BJ (cell line): ENCODE measurements at regions of chr12 and their contacts with region 1.

Region 1: GRCh38 chr12:49088190-49088931 is 6.2 kb downstream of the DHH start:
- DNase-seq: peak; percentile 39
- H3K4me3 ChIP-seq: no peak overlapping the region
- H3K27me3 ChIP-seq: peaks cover 9% of the 10 kb centered on the region
- CTCF ChIP-seq: peak; percentile 93

Region 2: GRCh38 chr12:48454667-48455066 is 633.7 kb before region 1 on chr12:
- CTCF ChIA-PET with region 1: no interaction called
- POLR2A ChIA-PET with region 1: no interaction called
- DNase-seq: peak; percentile 1
- H3K4me3 ChIP-seq: no peak overlapping the region
- H3K27me3 ChIP-seq: 0 out of 2 replicates have a peak, but pooled peaks cover 1% of the 10 kb centered on the region
- CTCF ChIP-seq: peak; percentile 31; the same call in 1 of the 2 replicates

Region 3: GRCh38 chr12:48917857-48918537 is 170.4 kb before region 1 on chr12:
- CTCF ChIA-PET with region 1: no interaction called
- POLR2A ChIA-PET with region 1: no interaction called
- DNase-seq: no peak
- H3K4me3 ChIP-seq: no peak overlapping the region
- H3K27me3 ChIP-seq: no peaks in the 10 kb centered on the region
- CTCF ChIP-seq: no peak

Region 4: GRCh38 chr12:49069507-49070346 is 18.6 kb before region 1 on chr12 and contains the start of gene RHEBL1:
- CTCF ChIA-PET with region 1: interaction called, 98 read pairs
- POLR2A ChIA-PET with region 1: no interaction called
- DNase-seq: peak; percentile 71
- H3K4me3 ChIP-seq: peak within 1 kb of the TSS; percentile 71
- H3K27me3 ChIP-seq: no peaks in the 10 kb centered on the region
- CTCF ChIP-seq: peak; percentile 21
- polyA plus RNA-seq, gene RHEBL1: 0.82 and 1.3 TPM in 2 replicates

Region 5: DNA sequence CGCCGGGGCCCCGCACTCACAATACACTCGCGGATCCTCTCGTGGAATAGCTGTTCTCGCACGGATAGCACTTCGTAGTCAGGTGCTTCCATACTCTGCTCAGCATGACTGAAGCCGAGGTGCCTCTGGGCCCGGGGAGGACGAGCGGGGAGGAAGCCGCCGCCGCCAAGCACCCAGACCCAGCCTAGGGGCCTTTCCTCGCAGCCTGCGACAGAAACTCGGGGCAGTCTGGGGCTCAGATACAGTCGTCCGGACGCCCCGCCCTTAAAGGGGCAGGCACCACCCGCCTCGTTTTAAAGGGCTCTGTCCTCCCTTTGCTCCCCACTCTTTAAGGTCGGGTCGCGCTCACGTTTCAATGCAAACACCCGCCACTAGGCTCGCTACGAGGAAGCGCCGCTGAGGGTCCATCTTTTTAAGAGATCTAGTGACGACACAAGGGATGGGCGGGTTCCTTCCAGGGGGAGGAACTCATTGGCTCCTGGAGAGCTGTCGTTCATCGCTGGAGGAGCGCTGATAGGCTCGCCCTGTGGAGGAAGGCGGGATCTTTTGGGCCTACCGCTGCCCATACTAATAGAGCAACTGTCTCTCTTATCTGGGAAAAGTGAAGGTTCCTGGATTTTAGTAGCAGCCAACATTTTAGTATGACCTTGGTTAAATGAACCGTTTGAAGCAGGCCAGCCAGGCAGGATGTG is 22.2 kb after region 1 on chr12 and contains the start of gene LMBR1L:
- CTCF ChIA-PET with region 1: interaction called, 145 read pairs
- POLR2A ChIA-PET with region 1: no interaction called
- DNase-seq: peak; percentile 95
- H3K4me3 ChIP-seq: peak within 1 kb of the TSS; percentile 79
- H3K27me3 ChIP-seq: no peaks in the 10 kb centered on the region
- CTCF ChIP-seq: peak; percentile 67
- polyA plus RNA-seq, gene LMBR1L: 37.2 and 63.1 TPM in 2 replicates

Region 6: GRCh38 chr12:49232940-49233841 is 144.8 kb after region 1 on chr12:
- CTCF ChIA-PET with region 1: interaction called, 29 read pairs
- POLR2A ChIA-PET with region 1: no interaction called
- DNase-seq: no peak
- H3K4me3 ChIP-seq: no peak overlapping the region
- H3K27me3 ChIP-seq: no peaks in the 10 kb centered on the region
- CTCF ChIP-seq: no peak

Region 7: GRCh38 chr12:49750027-49750995 is 662.0 kb after region 1 on chr12:
- CTCF ChIA-PET with region 1: no interaction called
- POLR2A ChIA-PET with region 1: no interaction called
- DNase-seq: no peak
- H3K4me3 ChIP-seq: no peak overlapping the region
- H3K27me3 ChIP-seq: no peaks in the 10 kb centered on the region
- CTCF ChIP-seq: no peak